Activated CD4-positive, alpha-beta memory T cell treated with anti-CD3 and anti-CD28 coated beads for 36 hours (primary cell): ENCODE measurements at regions of chr3 and their contacts with region 1.

Region 1: GRCh38 chr3:182739619-182740018 is 53.7 kb upstream of the ATP11B start:
- DNase-seq: no peak
- H3K4me3 Mint-ChIP-seq: no peak overlapping the region
- H3K27ac Mint-ChIP-seq: no peak overlapping the region
- H3K4me1 Mint-ChIP-seq: no peaks in the 10 kb centered on the region
- H3K27me3 Mint-ChIP-seq: peaks cover 5% of the 10 kb centered on the region

Region 2: DNA sequence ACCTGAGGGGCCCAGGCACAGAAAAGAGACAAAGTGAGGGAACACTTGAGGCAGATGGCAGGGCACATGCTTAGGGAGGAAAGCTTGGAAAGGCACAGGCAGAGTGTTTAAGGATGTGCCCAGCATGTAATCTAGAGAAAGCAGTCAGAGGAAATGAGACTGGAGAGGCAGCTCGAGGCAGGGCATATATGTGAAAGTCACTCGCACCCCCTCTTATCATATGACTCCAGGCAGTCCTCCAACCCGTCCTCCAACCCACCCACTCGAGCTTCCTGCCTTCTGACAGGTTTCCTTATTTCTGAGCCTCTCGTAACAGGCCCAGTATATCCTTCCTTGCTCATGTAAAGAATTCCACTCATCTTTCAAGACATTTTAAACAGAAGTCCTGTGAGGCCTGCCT is 733.9 kb before region 1 on chr3:
- CTCF ChIA-PET with region 1: no interaction called
- POLR2A ChIA-PET with region 1: no interaction called
- intact Hi-C with region 1: loop called (anchors 5 kb)
- DNase-seq: no peak
- H3K4me3 Mint-ChIP-seq: no peak overlapping the region
- H3K27ac Mint-ChIP-seq: no peak overlapping the region
- H3K4me1 Mint-ChIP-seq: no peaks in the 10 kb centered on the region
- H3K27me3 Mint-ChIP-seq: no peaks in the 10 kb centered on the region

Region 3: GRCh38 chr3:182802413-182803390 is 63.1 kb after region 1 on chr3:
- CTCF ChIA-PET with region 1: no interaction called
- POLR2A ChIA-PET with region 1: no interaction called
- intact Hi-C with region 1: no loop called
- DNase-seq: no peak
- H3K4me3 Mint-ChIP-seq: no peak overlapping the region
- H3K27ac Mint-ChIP-seq: no peak overlapping the region
- H3K4me1 Mint-ChIP-seq: peaks cover 60% of the 10 kb centered on the region
- H3K27me3 Mint-ChIP-seq: no peaks in the 10 kb centered on the region